MCF 10A (cell line): ENCODE measurements at regions of chr6 and their contacts with region 1.

Region 1: DNA sequence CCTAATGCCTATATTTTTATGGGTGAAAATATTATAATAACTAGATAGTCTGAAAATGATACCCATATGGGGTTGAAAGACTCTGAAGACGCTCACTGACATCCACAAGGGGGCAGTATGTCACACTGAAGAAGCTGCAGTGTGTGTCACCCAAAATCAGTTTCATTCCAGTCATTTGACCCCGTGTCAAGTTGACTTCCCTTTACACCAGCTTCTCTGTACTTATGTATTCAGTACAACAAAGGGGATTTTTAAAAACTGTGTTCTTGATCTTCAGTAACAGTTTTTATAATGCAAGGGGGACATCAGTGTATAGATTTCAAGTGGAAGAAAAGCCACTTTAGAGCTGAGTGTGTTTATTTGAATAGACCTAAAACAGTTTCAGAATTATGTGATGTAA is 19.3 kb downstream of the FAXC start:
- DNase-seq: peak; percentile 82
- H3K4me3 Mint-ChIP-seq: no peak overlapping the region
- H3K27ac Mint-ChIP-seq: no peak overlapping the region
- H3K4me1 Mint-ChIP-seq: peaks cover 8% of the 10 kb centered on the region
- H3K27me3 Mint-ChIP-seq: no peaks in the 10 kb centered on the region
- CTCF ChIP-seq: peak; percentile 76

Region 2: DNA sequence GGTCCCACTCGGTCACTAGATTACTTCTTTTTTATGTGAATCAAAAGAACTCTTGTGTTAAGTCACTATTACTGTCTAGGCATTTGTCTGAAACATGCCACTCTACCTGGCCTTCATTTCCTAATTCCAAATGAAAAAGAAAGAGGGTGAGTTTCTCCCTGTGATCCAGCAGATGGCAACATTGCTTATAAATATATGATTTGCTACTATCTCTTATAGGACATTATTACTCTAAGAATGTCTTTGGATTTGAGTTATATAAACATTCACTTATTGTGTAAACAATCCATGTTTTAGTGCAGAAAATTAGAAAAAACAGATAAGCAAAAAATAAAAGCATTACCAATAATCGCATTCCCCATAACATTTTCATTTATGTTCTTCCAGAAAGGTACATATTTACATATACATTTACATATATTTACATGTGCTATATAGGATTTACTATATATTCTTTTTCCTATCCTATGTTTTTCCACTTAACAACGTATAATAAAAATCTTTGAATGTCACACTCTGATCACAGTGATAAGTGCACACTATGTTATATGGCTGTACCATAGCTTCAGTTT is 47.6 kb before region 1 on chr6:
- CTCF ChIA-PET with region 1: interaction called, 7 read pairs
- POLR2A ChIA-PET with region 1: no interaction called
- intact Hi-C with region 1: loop called (anchors 2 kb)
- DNase-seq: peak; percentile 28
- H3K4me3 Mint-ChIP-seq: no peak overlapping the region
- H3K27ac Mint-ChIP-seq: no peak overlapping the region
- H3K4me1 Mint-ChIP-seq: no peaks in the 10 kb centered on the region
- H3K27me3 Mint-ChIP-seq: no peaks in the 10 kb centered on the region
- CTCF ChIP-seq: peak; percentile 33

Region 3: GRCh38 chr6:99312354-99312753 is 17.8 kb before region 1 on chr6:
- CTCF ChIA-PET with region 1: interaction called, 24 read pairs
- POLR2A ChIA-PET with region 1: no interaction called
- intact Hi-C with region 1: no loop called
- DNase-seq: no peak
- H3K4me3 Mint-ChIP-seq: no peak overlapping the region
- H3K27ac Mint-ChIP-seq: no peak overlapping the region
- H3K4me1 Mint-ChIP-seq: no peaks in the 10 kb centered on the region
- H3K27me3 Mint-ChIP-seq: no peaks in the 10 kb centered on the region
- CTCF ChIP-seq: no peak

Region 4: DNA sequence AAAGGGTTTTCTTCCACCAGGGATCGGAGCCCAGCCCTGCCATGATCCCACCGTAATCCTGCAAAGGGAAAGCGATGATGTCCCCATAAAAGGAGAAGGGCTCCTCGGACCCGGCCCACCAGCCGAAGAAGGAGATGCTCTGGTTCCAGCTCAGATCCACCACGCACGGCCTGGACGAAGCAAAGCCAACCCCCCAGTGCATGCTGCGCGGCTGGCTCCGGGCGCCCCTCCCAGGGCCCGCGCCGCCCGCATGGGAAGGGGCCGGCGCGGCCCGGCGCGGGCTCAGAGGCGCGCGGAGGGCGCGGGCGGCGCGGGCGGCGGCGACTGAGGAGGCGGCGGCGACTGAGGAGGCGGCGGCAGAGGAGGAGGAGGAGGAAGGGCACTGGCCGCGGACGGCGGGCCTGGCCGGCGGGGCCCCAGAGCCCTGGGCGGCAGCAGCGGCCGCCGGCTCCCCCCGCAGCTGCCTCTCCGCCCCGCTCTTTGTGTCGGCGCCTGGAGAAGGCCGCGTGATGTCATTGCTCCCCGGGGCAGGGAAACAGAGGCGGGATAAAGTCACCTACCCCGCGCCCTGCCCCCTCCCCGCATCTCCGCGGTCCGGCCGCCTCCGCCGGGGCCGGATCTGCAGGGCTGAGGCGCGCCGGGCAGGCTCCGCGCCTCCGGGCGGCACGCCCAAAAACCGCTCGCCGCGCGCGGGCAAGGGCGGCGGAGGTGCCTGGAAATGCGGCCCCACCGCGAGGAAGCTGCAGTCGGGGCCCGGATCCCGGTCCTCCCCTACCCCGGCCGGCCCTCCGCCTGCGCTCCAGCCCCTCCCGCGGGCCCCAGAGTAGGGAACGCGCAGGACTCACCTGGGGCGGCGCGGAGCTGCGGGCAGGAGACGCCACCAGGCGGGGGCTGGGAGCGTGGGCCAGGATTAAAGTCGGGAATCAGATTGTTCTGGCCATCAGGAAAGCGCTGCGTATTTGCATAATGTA is 19.3 kb after region 1 on chr6 and contains the start of gene FAXC:
- CTCF ChIA-PET with region 1: interaction called, 92 read pairs
- POLR2A ChIA-PET with region 1: interaction called, 5 read pairs
- intact Hi-C with region 1: loop called (anchors 1 kb)
- DNase-seq: peak; percentile 73
- H3K4me3 Mint-ChIP-seq: peak within 1 kb of the TSS; percentile 63
- H3K27ac Mint-ChIP-seq: no peak within 1 kb of the TSS
- H3K4me1 Mint-ChIP-seq: peaks cover 1% of the 10 kb centered on the region
- H3K27me3 Mint-ChIP-seq: peaks cover 13% of the 10 kb centered on the region
- CTCF ChIP-seq: no peak
- total RNA-seq, gene FAXC: 2.3 and 3.6 TPM in 2 replicates

Region 5: DNA sequence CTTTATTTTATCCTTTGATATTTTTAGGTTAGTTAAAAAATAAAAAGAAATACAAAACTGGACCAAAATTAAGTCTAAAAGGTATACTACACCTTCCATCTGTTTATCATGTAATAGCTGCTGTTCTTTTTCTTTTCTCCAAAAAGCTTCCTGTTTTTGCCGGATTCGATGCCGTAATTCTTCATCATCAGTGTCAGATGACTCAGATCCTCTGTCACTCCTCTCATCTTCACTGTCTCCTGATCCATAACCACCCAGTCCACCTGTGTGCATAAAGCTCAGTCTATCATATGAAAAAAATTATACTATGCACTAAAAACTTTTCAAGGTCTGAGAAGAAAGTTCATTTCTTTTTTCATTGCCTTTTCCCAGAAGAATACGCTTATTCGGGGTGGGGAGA is 72.3 kb after region 1 on chr6:
- CTCF ChIA-PET with region 1: interaction called, 11 read pairs
- POLR2A ChIA-PET with region 1: no interaction called
- intact Hi-C with region 1: no loop called
- DNase-seq: no peak
- H3K4me3 Mint-ChIP-seq: no peak overlapping the region
- H3K27ac Mint-ChIP-seq: no peak overlapping the region
- H3K4me1 Mint-ChIP-seq: no peaks in the 10 kb centered on the region
- H3K27me3 Mint-ChIP-seq: no peaks in the 10 kb centered on the region
- CTCF ChIP-seq: no peak

Region 6: DNA sequence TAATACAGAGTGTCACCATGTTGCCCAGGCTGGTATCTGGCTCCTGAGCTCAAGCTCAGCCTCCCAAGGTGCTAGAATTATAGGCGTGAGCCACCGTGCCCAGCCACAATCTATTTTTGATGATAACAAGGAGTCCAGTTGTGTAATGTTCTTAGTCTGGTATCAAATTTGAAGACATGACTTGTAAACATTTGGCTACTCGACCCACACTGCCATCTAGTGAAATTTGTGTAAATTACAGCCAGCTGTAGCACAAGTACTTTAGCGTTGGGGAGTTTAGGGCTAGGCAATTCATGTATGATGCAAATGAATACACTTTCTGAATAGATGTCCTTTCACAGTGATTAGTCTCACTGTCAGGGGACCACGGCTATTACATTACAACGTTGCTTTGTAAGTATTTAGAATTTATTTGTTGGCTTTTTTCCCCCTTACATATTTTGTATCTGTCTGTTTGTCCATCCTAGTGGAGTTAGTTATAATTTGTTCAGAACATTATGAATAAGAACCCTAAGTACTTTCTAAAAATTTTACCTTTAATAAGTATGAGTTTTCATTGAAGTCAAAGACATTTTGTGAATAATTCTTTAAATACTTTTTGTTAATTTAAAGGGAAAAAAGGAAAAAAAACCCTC is 416.2 kb after region 1 on chr6:
- CTCF ChIA-PET with region 1: interaction called, 6 read pairs
- POLR2A ChIA-PET with region 1: no interaction called
- intact Hi-C with region 1: loop called (anchors 2 kb)
- DNase-seq: peak; percentile 73
- H3K4me3 Mint-ChIP-seq: no peak overlapping the region
- H3K27ac Mint-ChIP-seq: no peak overlapping the region
- H3K4me1 Mint-ChIP-seq: no peaks in the 10 kb centered on the region
- H3K27me3 Mint-ChIP-seq: peaks cover 75% of the 10 kb centered on the region
- CTCF ChIP-seq: peak; percentile 80

Region 7: GRCh38 chr6:99822741-99823512 is 492.8 kb after region 1 on chr6:
- CTCF ChIA-PET with region 1: interaction called, 3 read pairs
- POLR2A ChIA-PET with region 1: interaction called, 3 read pairs
- intact Hi-C with region 1: loop called (anchors 2 kb)
- DNase-seq: peak; percentile 81
- H3K4me3 Mint-ChIP-seq: peak overlapping the region; percentile 73
- H3K27ac Mint-ChIP-seq: no peak overlapping the region
- H3K4me1 Mint-ChIP-seq: peaks cover 11% of the 10 kb centered on the region
- H3K27me3 Mint-ChIP-seq: no peaks in the 10 kb centered on the region
- CTCF ChIP-seq: peak; percentile 66